Activated CD4-positive, alpha-beta memory T cell treated with anti-CD3 and anti-CD28 coated beads for 36 hours (primary cell): ENCODE measurements at regions of chrX and their contacts with region 1.

Region 1: DNA sequence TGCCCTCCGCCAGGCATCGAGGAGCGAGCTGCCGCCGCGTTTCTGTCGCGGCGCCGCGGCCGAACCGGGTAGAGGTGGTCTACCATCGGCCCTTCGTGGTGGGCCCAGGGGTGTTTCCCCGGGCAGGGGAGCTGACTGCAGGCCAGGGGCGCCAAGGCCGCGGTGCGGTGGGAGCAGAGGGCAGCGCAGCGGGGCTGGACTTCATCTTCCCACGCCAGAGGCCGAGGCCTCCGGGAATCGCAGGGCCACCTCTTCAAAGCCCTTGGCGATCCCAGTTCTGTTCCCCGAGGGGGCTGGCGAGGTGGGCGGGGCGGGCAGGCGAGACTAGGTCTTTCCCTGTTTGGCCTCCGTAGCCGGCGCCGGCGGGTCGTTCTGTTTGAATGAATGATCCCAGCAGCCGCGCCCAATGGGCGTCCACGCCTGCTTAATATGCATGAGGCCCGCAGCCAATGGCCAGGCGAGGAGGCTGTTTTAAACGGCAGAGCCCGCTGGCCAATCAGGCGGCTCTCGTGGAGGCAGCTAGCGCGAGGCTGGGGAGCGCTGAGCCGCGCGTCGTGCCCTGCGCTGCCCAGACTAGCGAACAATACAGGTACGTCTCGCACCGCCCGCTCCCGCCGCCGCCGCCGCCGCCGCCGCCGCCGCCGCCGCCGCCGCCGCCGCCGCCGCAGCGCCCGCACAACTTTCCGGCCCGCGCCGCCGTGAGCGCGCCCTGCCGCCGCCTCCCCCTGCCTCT is at the start of gene HMGB3:
- DNase-seq: peak; percentile 91
- H3K4me3 Mint-ChIP-seq: peak within 1 kb of the TSS; percentile 62
- H3K27ac Mint-ChIP-seq: no peak within 1 kb of the TSS
- H3K4me1 Mint-ChIP-seq: peaks cover 9% of the 10 kb centered on the region
- H3K27me3 Mint-ChIP-seq: peaks cover 3% of the 10 kb centered on the region
- total RNA-seq, gene HMGB3: 30.7 to 40.7 TPM

Region 2: DNA sequence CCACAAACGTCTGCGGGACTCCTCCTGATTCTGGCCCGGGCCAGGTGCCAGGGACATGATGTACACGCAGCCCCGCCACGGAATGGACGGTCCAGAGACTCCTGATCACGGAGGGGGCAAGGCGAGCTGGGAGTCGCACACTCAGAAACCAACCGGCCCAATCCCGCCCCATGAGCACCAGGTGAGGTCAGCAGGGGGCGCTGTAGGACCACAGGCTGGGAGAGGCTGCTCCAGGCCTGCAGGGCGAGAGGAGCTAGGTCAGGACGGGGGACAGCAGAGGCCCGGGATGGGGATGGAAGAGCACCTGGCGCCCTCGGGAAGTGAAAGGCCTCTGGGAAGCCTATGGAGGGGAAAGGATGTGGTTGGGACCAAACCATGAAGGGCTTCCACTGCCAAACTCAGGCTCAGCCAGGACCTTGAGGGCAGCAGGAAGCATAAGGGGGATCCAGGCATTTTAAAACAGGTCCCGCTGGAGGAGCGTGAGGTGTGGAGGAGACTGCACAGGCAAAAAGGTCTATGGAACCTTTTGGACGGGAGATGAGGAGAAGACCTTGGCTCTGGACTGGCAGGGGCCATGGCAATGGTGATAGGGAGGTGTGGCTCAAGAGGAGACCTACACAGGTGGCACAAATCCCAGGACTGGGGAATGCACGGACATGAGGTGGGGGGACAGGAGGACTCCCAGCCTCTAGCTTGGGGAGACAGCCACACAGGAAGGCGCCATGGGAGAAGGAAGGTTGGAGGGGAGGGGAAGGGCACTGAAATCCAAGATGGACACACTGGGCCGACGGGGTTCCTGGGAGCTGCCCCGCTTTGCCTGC is 210.6 kb before region 1 on chrX:
- CTCF ChIA-PET with region 1: interaction called, 10 read pairs
- POLR2A ChIA-PET with region 1: interaction called, 4 read pairs
- intact Hi-C with region 1: loop called (anchors 5 kb)
- DNase-seq: peak; percentile 81
- H3K4me3 Mint-ChIP-seq: no peak overlapping the region
- H3K27ac Mint-ChIP-seq: no peak overlapping the region
- H3K4me1 Mint-ChIP-seq: peaks cover 7% of the 10 kb centered on the region
- H3K27me3 Mint-ChIP-seq: no peaks in the 10 kb centered on the region

Region 3: GRCh38 chrX:150898343-150899190 is 84.4 kb before region 1 on chrX and contains the start of gene CD99L2:
- CTCF ChIA-PET with region 1: no interaction called
- POLR2A ChIA-PET with region 1: no interaction called
- intact Hi-C with region 1: loop called (anchors 1 kb)
- DNase-seq: peak; percentile 93
- H3K4me3 Mint-ChIP-seq: peak within 1 kb of the TSS; percentile 77
- H3K27ac Mint-ChIP-seq: peak within 1 kb of the TSS; percentile 49
- H3K4me1 Mint-ChIP-seq: peaks cover 13% of the 10 kb centered on the region
- H3K27me3 Mint-ChIP-seq: no peaks in the 10 kb centered on the region
- total RNA-seq, gene CD99L2: 14.9 to 15.7 TPM

Region 4: DNA sequence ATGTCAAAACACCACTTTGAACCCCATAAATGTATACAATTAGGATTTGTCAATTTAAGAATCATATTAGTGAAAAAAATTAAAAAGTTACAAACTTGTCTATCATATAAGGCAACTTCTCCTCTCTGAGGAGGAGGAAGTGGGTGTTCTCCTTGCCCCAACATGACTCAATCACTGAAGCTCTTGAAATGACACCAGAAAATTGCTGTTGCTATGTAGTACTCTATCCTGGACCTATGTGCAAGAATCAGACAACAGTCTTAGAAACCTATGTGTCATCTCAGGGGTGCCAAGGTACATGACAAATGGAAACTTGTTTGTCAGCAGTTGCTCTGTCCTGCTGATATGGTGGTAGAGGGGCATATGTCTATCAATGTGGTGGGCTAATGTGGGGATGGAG is 47.9 kb after region 1 on chrX:
- CTCF ChIA-PET with region 1: no interaction called
- POLR2A ChIA-PET with region 1: no interaction called
- intact Hi-C with region 1: loop called (anchors 5 kb)
- DNase-seq: peak; percentile 9
- H3K4me3 Mint-ChIP-seq: no peak overlapping the region
- H3K27ac Mint-ChIP-seq: peak overlapping the region; percentile 49
- H3K4me1 Mint-ChIP-seq: peaks cover 10% of the 10 kb centered on the region
- H3K27me3 Mint-ChIP-seq: no peaks in the 10 kb centered on the region

Region 5: GRCh38 chrX:151082076-151082948 is 99.4 kb after region 1 on chrX:
- CTCF ChIA-PET with region 1: no interaction called
- POLR2A ChIA-PET with region 1: no interaction called
- intact Hi-C with region 1: loop called (anchors 10 kb)
- DNase-seq: peak; percentile 68
- H3K4me3 Mint-ChIP-seq: no peak overlapping the region
- H3K27ac Mint-ChIP-seq: no peak overlapping the region
- H3K4me1 Mint-ChIP-seq: peaks cover 2% of the 10 kb centered on the region
- H3K27me3 Mint-ChIP-seq: peaks cover 10% of the 10 kb centered on the region

Region 6: GRCh38 chrX:151396825-151397740 is 414.1 kb after region 1 on chrX and contains the start of gene VMA21:
- CTCF ChIA-PET with region 1: no interaction called
- POLR2A ChIA-PET with region 1: no interaction called
- intact Hi-C with region 1: loop called (anchors 2 kb)
- DNase-seq: peak; percentile 89
- H3K4me3 Mint-ChIP-seq: peak within 1 kb of the TSS; percentile 89
- H3K27ac Mint-ChIP-seq: peak within 1 kb of the TSS; percentile 96
- H3K4me1 Mint-ChIP-seq: peaks cover 45% of the 10 kb centered on the region
- H3K27me3 Mint-ChIP-seq: no peaks in the 10 kb centered on the region
- total RNA-seq, gene VMA21: 39.9 to 43.6 TPM